ENCODE measurements at regions of chr11 and their contacts with region 1.

Region 1: GRCh38 chr11:78350646-78351165 is 66.9 kb downstream of the GAB2 start:
- DNase-seq: peak in 1 of 2 donors; percentile 58
- ATAC-seq: peak; percentile 73 to 84 (median 80)
- H3K4me3 ChIP-seq: peak overlapping the region in 7 of 10 donors; percentile 11 to 40 (median 23)
- H3K27ac ChIP-seq: peak overlapping the region in 9 of 10 donors; percentile 63 to 91 (median 81)
- H3K4me1 ChIP-seq: peaks cover 12 to 100% (median 71%) of the 10 kb centered on the region in 9 donors
- H3K27me3 ChIP-seq: no peaks in the 10 kb centered on the region
- CTCF ChIP-seq: peak in 2 of 9 donors; percentile 14 to 40

Region 2: GRCh38 chr11:78256962-78257361 is 93.7 kb before region 1 on chr11:
- intact Hi-C with region 1: loop called in 2 of 10 experiments (anchors 10 kb)
- DNase-seq: peak; percentile 75 to 84
- ATAC-seq: peak; percentile 89 to 97 (median 93)
- H3K4me3 ChIP-seq: no peak overlapping the region
- H3K27ac ChIP-seq: peak overlapping the region; percentile 22 to 84 (median 58)
- H3K4me1 ChIP-seq: peaks cover 10 to 84% (median 46%) of the 10 kb centered on the region in 9 donors
- H3K27me3 ChIP-seq: no peaks in the 10 kb centered on the region
- CTCF ChIP-seq: no peak

Region 3: DNA sequence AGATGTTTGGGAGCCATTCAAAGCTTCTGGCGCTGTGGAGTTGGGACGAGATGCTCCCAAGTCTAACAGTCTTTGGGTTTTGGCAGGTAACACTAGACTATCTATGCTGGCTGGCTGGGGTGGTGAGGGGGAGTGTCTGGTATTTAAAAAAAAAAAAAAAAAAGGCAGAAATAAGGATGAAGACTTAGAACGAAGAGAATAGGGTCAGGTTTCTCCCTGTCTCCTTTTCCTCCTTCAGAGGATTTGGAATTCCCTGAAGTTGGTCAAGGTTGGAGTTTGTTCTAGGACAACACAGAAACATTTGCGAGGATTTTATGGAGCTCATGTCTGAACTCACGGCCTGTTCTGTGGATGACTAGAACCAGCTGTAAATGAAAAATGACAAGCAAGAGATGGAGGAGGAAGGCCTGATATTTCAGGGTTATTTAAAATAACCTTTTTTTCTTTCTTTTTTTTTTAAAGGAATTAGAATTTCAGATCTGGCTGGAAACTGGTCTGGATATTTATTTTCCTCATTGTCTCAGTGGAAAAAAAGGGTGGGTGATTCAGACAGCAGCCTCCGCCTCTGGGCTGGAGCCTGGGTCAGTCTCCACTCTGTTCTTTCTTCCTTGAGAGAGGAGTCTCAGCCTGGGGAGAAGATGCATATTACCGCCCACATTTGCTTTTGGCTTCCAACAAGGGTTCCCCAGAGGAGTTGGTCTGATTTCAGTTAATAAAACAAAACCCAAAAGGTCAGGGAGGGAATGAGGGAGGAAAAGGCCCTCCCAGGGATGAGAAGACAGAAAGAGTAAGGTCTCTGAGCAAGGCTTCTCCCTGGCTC is 81.9 kb before region 1 on chr11:
- intact Hi-C with region 1: loop called in 1 of 10 experiments (anchors 10 kb)
- DNase-seq: peak; percentile 29 to 58
- ATAC-seq: peak; percentile 90 to 96 (median 92)
- H3K4me3 ChIP-seq: no peak overlapping the region
- H3K27ac ChIP-seq: peak overlapping the region in 9 of 10 donors; percentile 43 to 79 (median 68)
- H3K4me1 ChIP-seq: peaks cover 0 to 50% (median 23%) of the 10 kb centered on the region in 9 donors
- H3K27me3 ChIP-seq: no peaks in the 10 kb centered on the region
- CTCF ChIP-seq: no peak

Region 4: GRCh38 chr11:78310500-78310909 is 40.2 kb before region 1 on chr11:
- intact Hi-C with region 1: loop called in 1 of 10 experiments (anchors 5 kb)
- DNase-seq: peak; percentile 73 to 77
- ATAC-seq: peak; percentile 85 to 95 (median 88)
- H3K4me3 ChIP-seq: peak overlapping the region in 4 of 10 donors; percentile 23 to 30 (median 26)
- H3K27ac ChIP-seq: peak overlapping the region in 9 of 10 donors; percentile 6 to 80 (median 70)
- H3K4me1 ChIP-seq: peaks cover 20 to 69% (median 61%) of the 10 kb centered on the region in 9 donors
- H3K27me3 ChIP-seq: no peaks in the 10 kb centered on the region
- CTCF ChIP-seq: no peak

Region 5: DNA sequence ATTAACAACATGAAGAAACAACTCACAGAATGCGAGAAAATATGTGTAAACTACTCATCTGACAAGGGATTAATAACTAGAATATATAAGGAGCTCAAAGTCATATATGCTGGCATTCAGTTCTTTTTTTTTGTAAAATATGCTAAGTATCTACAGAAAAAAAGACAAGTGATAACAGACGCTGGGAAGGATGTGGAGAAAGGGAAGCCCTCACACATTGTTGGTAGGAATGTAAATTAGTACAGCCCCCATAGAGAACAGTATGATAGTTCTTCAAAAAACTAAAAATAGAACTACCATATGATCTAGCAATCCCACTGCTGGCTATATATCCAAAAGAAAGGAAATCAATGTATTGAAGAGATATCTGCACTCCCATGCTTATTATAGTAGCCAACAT is 53.1 kb after region 1 on chr11:
- intact Hi-C with region 1: loop called in 1 of 10 experiments (anchors 5 kb)
- DNase-seq: no peak
- ATAC-seq: no peak
- H3K4me3 ChIP-seq: no peak overlapping the region
- H3K27ac ChIP-seq: no peak overlapping the region
- H3K4me1 ChIP-seq: peaks cover 0 to 40% (median 12%) of the 10 kb centered on the region in 9 donors
- H3K27me3 ChIP-seq: no peaks in the 10 kb centered on the region
- CTCF ChIP-seq: no peak

Measured in heart right ventricle (tissue), 16 donors.